ENCODE measurements at regions of chr1 and their contacts with region 1.

Region 1: GRCh38 chr1:173824331-173825081 is at the starts of genes CENPL and DARS2:
- DNase-seq: peak; percentile 98
- ATAC-seq: peak; percentile 97 to 99
- total RNA-seq, gene CENPL: 4.3 to 4.9 TPM
- total RNA-seq, gene DARS2: 13.1 to 13.2 TPM

Region 2: GRCh38 chr1:173420330-173420806 is 404.1 kb before region 1 on chr1:
- intact Hi-C with region 1: loop called (anchors 2 to 10 kb)
- DNase-seq: peak; percentile 62
- ATAC-seq: peak; percentile 84 to 87

Region 3: GRCh38 chr1:173429471-173430402 is 394.8 kb before region 1 on chr1:
- intact Hi-C with region 1: loop called in 1 of 2 experiments (anchors 10 kb)
- DNase-seq: peak; percentile 95
- ATAC-seq: peak; percentile 95 to 99

Region 4: DNA sequence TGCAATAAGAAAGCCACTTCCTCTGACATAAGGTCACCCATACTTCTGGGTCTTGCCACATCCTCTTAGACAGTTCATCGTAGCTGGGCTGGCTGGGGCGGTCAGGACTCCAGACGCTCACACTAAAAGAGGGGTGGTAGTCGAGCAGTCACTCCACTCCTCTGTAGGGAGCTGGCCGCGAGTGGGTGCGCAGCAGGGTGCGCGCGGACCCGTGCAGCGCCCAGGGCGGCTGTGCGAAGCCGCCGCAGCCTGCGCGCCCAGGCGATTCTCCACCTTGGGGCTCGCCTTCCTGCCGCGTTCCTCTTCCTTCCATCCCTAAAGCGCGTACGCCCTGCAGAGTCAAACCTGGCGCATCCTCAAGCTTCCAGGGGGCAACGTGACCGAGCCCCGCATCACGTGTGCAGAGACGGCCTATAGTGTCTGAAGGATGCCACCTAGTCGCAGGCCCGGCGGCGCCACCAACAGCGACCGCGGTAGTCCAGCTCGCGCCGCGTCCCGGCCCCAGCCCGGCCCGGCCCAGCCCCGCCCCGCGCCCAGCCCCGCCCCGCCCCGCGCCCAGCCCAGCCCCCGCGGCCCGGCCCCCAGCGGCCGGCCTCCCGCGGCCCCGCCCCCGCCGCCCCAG is 347.7 kb before region 1 on chr1:
- intact Hi-C with region 1: loop called in 1 of 2 experiments (anchors 5 kb)
- DNase-seq: peak; percentile 93
- ATAC-seq: peak; percentile 87 to 89

Region 5: DNA sequence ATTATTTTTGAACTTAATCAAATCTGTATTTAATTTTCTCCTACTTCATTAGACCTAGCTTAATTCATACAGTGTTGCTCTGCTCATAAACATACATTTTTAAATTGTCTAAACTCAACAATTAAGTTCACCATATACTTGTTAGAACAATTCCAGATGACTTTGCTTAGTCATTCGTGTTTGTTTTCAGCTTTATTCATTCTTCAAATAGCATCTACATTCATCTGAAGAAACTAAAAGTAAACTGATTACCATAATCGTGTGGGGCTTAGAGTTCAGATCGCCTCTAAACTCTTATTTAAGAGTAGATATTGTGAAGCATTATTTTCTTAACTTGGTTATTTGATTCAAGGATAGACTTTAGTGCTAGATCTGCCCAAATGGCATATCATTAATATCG is 75.4 kb before region 1 on chr1:
- intact Hi-C with region 1: no loop called
- DNase-seq: no peak
- ATAC-seq: no peak

Region 6: DNA sequence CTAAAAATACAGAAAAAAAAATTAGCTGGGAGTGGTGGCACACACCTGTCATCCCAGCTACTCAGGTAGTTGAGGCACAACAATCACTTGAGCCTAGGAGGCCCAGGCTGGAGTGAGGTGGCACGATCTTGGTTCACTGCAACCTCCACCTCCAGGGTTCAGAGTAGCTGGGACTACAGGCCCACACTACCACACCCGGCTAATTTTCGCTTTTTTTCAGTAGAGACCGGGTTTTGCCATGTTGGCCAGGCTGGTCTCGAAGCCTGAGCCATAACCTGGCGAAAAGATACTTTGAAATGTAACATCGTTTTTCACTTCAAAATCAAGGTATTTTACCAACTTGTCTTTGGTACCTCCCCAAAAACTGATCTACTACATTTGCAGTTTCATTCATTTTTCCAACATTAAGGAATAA is 37.2 kb after region 1 on chr1:
- intact Hi-C with region 1: no loop called
- DNase-seq: no peak
- ATAC-seq: peak in 1 of 2 donors; percentile 8